ENCODE measurements at regions of chr5 and their contacts with region 1.

Region 1: GRCh38 chr5:140647042-140647341 is 438 bp downstream of the NDUFA2 start:
- DNase-seq: no peak
- ATAC-seq: peak; percentile 14
- H3K4me3 Mint-ChIP-seq: peak overlapping the region; percentile 97
- H3K27ac Mint-ChIP-seq: peak overlapping the region; percentile 98
- H3K4me1 Mint-ChIP-seq: peaks cover 27% of the 10 kb centered on the region
- H3K27me3 Mint-ChIP-seq: no peaks in the 10 kb centered on the region

Region 2: GRCh38 chr5:140113699-140114263 is 533.2 kb before region 1 on chr5 and contains the start of gene PURA:
- CTCF ChIA-PET with region 1: no interaction called
- POLR2A ChIA-PET with region 1: no interaction called
- intact Hi-C with region 1: no loop called
- DNase-seq: peak; percentile 98
- ATAC-seq: peak; percentile 92
- H3K4me3 Mint-ChIP-seq: peak within 1 kb of the TSS; percentile 89
- H3K27ac Mint-ChIP-seq: peak within 1 kb of the TSS; percentile 84
- H3K4me1 Mint-ChIP-seq: peaks cover 65% of the 10 kb centered on the region
- H3K27me3 Mint-ChIP-seq: peaks cover 3% of the 10 kb centered on the region
- total RNA-seq, gene PURA: 9.5 to 10.7 TPM

Region 3: GRCh38 chr5:140547508-140548299 is 99.3 kb before region 1 on chr5 and contains the start of gene EIF4EBP3:
- CTCF ChIA-PET with region 1: interaction called, 8 read pairs
- POLR2A ChIA-PET with region 1: interaction called, 10 read pairs
- intact Hi-C with region 1: loop called (anchors 1 to 5 kb)
- DNase-seq: peak; percentile 93
- ATAC-seq: peak; percentile 99
- H3K4me3 Mint-ChIP-seq: peak within 1 kb of the TSS; percentile 82
- H3K27ac Mint-ChIP-seq: peak within 1 kb of the TSS; percentile 93
- H3K4me1 Mint-ChIP-seq: peaks cover 38% of the 10 kb centered on the region
- H3K27me3 Mint-ChIP-seq: no peaks in the 10 kb centered on the region
- total RNA-seq, gene EIF4EBP3: 15.8 to 17.3 TPM

Region 4: DNA sequence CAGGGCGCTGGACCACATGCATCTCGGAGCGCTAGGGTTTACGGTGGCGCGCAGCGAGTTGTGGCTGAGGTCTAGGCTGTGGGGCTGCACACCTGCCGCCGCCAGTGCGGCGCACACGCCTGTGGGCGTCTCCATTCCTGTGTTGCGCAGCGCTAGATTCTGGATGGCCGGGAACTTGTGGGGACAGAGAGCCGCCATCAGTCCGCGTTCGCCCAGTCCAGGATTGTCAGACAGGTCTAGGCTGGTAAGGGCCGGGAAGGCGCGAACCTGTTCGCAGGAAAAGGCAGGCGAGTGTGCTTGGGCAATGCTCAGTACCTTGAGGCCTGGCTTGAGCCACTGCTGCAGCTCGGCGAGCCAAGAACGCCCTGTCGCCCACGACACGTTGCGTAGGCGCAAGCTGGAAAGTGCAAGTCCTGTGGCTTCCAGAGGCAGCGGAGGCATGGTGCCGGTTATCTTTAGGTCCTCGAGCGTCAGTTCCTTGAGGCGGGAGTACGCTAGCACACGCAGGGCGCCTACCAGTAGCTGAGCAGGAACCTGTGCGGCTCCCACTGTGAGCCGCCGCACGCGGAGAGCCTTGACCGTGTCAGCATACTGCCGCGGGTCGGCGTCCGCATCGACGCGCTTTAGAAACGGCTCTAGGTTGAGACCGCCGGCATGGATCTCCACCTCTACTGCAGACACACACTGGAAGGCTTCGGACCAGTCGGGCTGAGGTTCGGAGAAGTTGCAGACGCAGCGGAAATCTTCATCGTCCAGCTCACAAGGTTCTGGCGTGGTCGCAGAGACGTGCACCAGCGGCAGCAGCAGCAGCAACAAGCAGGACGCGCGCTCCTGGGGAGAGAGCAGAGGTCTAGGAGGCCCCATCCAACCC is 14.6 kb before region 1 on chr5:
- CTCF ChIA-PET with region 1: interaction called, 13 read pairs
- POLR2A ChIA-PET with region 1: interaction called, 7 read pairs
- intact Hi-C with region 1: no loop called
- DNase-seq: peak; percentile 69
- ATAC-seq: peak; percentile 67
- H3K4me3 Mint-ChIP-seq: peak overlapping the region; percentile 74
- H3K27ac Mint-ChIP-seq: peak overlapping the region; percentile 73
- H3K4me1 Mint-ChIP-seq: peaks cover 31% of the 10 kb centered on the region
- H3K27me3 Mint-ChIP-seq: peaks cover 14% of the 10 kb centered on the region

Region 5: GRCh38 chr5:140664359-140665119 is 17.5 kb after region 1 on chr5 and contains the start of gene WDR55:
- CTCF ChIA-PET with region 1: interaction called, 5 read pairs
- POLR2A ChIA-PET with region 1: interaction called, 17 read pairs
- intact Hi-C with region 1: loop called (anchors 1 kb)
- DNase-seq: peak; percentile 97
- ATAC-seq: peak; percentile 96
- H3K4me3 Mint-ChIP-seq: peak within 1 kb of the TSS; percentile 98
- H3K27ac Mint-ChIP-seq: peak within 1 kb of the TSS; percentile 96
- H3K4me1 Mint-ChIP-seq: peaks cover 28% of the 10 kb centered on the region
- H3K27me3 Mint-ChIP-seq: no peaks in the 10 kb centered on the region
- total RNA-seq, gene WDR55: 25.9 to 31.7 TPM

Region 6: DNA sequence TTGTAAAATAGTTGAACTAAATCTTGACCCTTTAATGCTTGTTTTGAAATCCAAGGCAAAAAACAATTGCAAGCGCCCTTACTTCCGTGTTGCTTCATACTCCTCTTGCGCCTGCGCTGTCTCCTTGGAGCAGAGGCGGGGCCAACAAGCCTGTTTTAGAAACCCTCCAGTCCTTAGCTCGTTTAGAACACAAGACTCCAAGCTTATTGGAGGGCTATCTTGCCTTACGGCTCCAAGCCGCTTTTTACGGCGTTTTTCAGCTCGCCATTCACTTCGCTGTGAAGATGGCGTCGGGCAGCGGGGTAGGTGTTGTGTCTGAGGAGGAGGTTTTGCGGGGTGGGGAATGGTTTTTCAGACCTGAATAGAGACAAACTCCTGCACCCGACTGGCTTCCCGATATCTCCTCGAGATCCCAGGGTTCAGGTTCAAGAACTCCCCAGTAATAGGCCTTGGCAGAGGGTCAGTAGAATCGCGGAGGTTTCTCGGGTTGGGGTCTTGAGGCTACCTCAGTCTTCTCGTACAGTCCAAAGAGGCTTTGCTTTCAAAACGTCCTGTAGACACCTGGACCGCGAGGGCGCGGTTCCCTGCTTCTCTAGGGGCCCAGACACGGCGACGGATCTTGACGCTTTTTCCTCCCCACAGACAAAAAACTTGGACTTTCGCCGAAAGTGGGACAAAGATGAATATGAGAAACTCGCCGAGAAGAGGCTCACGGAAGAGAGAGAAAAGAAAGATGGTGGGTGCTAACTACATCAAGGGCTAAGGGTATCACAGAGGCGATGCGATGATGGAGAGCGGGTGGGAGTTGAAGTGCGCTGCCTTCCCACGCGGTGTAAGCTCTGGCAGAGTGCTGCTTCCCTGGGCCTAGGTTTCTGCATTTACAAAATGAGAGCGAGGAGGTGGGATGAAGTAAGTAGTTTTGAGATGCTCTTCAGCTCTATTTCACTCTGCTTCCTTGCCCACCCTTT is 53.5 kb after region 1 on chr5 and contains the start of gene ZMAT2:
- CTCF ChIA-PET with region 1: interaction called, 5 read pairs
- POLR2A ChIA-PET with region 1: interaction called, 8 read pairs
- intact Hi-C with region 1: loop called (anchors 1 kb)
- DNase-seq: peak; percentile 96
- ATAC-seq: peak; percentile 100
- H3K4me3 Mint-ChIP-seq: peak within 1 kb of the TSS; percentile 94
- H3K27ac Mint-ChIP-seq: peak within 1 kb of the TSS; percentile 94
- H3K4me1 Mint-ChIP-seq: peaks cover 24% of the 10 kb centered on the region
- H3K27me3 Mint-ChIP-seq: no peaks in the 10 kb centered on the region
- total RNA-seq, gene ZMAT2: 49.9 to 55.3 TPM

Region 7: DNA sequence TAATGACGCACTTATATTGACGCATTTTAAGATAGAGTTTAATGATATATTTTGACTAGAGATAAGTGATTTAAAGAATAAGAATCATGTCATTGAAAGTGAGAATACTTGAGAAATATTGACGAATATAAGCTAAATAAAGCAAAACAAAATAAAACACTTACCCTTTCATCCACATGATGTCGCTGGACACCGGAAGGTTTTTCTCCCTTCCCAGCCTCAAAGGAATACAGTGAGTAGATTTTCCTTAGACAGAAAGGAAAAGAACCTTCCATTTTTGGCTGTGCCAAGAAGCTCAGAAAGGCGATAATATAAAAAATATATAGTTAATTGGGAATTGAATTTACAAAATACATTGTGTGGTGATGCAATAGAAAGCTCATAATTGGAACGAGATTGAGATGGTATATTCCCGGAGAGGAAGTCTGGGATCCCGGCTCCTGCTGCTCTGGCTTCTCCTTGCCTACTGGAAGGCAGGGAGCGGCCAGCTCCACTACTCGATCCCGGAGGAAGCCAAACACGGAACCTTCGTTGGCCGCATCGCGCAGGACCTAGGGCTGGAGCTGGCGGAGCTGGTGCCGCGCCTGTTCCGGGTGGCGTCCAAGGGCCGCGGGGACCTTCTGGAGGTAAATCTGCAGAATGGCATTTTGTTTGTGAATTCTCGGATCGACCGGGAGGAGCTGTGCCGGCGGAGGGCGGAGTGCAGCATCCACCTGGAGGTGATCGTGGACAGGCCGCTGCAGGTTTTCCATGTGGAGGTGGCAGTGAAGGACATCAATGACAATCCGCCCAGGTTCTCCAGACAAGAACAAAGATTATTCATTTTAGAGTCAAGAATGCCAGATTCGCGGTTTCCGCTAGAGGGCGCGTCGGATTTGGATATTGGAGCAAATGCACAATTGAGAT is 174.6 kb after region 1 on chr5 and contains the start of gene PCDHA5:
- CTCF ChIA-PET with region 1: no interaction called
- POLR2A ChIA-PET with region 1: no interaction called
- intact Hi-C with region 1: no loop called
- DNase-seq: peak; percentile 62
- ATAC-seq: no peak
- H3K4me3 Mint-ChIP-seq: no peak within 1 kb of the TSS
- H3K27ac Mint-ChIP-seq: no peak within 1 kb of the TSS
- H3K4me1 Mint-ChIP-seq: no peaks in the 10 kb centered on the region
- H3K27me3 Mint-ChIP-seq: peaks cover 5% of the 10 kb centered on the region
- total RNA-seq, gene PCDHA5: not detected

Region 8: GRCh38 chr5:140862441-140863295 is 215.7 kb after region 1 on chr5:
- CTCF ChIA-PET with region 1: no interaction called
- POLR2A ChIA-PET with region 1: no interaction called
- intact Hi-C with region 1: no loop called
- DNase-seq: no peak
- ATAC-seq: no peak
- H3K4me3 Mint-ChIP-seq: no peak overlapping the region
- H3K27ac Mint-ChIP-seq: no peak overlapping the region
- H3K4me1 Mint-ChIP-seq: no peaks in the 10 kb centered on the region
- H3K27me3 Mint-ChIP-seq: peaks cover 22% of the 10 kb centered on the region

Region 9: DNA sequence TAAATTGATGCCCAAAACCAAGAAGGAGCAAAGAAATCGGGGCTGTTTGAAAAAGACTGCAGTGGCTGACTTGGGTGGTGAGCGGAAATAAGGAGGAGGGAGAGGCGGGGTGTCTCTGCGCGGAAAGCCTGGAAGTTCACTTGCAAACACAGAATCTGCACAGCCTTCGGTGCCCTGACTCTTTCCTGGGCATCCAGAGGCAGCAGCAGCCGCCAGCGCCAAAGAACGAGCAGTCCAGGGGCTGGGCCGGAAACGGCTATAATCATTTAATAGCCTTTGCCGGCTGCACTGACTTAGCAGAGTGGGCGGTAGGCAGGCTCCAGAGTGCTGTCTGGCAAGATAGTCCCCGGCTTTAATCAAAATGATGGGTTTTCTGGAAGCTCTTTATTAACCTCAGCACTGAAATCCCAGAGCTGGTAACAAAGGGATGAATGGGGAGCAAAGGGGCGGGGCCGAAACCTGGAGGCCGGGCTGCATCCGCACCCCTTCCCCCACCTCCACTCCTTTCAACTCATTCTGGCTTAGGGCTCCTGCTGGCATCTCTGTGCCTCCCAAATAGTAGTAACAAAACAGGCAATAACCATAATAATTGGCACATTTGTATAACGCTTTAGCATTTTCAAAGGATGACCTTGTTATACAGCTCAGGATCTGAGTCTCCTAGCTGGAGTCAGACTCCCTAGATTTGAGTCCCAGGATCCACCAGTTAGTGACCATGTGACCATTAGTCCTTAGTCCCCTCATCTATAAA is 355.0 kb after region 1 on chr5:
- CTCF ChIA-PET with region 1: no interaction called
- POLR2A ChIA-PET with region 1: no interaction called
- intact Hi-C with region 1: no loop called
- DNase-seq: peak; percentile 6
- ATAC-seq: no peak
- H3K4me3 Mint-ChIP-seq: peak overlapping the region; percentile 47
- H3K27ac Mint-ChIP-seq: no peak overlapping the region
- H3K4me1 Mint-ChIP-seq: peaks cover 8% of the 10 kb centered on the region
- H3K27me3 Mint-ChIP-seq: peaks cover 30% of the 10 kb centered on the region

Measured in activated CD4-positive, alpha-beta T cell treated with anti-CD3 and anti-CD28 coated beads for 36 hours (primary cell).